ENCODE measurements at regions of chr14 and their contacts with region 1.

Region 1: DNA sequence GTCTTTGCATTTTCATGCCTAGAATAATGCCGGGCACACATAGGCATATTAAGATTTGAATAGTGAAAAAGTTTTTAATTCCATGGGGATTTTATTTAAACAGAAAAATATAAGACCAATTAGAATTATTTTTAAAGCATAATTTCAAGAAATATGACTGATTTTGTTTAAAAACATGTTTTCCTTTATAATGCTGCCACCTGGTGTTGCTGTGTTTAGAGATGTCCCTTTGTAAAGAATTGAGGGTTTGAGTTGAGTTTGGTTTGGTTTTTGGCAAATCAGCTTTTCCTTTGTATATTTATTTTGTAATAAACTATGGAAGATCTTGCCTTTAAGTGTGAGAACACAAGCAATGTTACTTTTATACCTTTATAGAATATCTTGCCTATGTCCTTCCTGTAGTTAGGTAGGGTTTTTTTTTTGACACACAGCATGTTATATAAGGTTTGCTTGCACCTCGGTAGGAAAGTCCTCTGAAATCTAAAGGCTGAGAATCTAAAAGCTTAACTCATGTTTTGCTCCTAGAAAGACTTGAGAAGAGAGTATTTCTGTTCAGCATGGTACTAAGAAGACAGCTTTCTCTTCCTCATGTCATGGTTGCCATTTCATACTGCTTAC is 31.4 kb upstream of the SNAPC1 start:
- DNase-seq: peak in 4 of 14 experiments; percentile 38 to 61 (median 55)
- ATAC-seq: no peak
- H3K4me3 ChIP-seq: no peak overlapping the region
- H3K4me3 Mint-ChIP-seq: no peak overlapping the region
- H3K27ac ChIP-seq: peak overlapping the region in 1 of 2 donors; percentile 2
- H3K27ac Mint-ChIP-seq: peak overlapping the region; percentile 27
- H3K4me1 ChIP-seq: no peaks in the 10 kb centered on the region
- H3K4me1 Mint-ChIP-seq: peaks cover 38% of the 10 kb centered on the region
- H3K27me3 ChIP-seq: no peaks in the 10 kb centered on the region
- H3K27me3 Mint-ChIP-seq: no peaks in the 10 kb centered on the region
- CTCF ChIP-seq: peak; percentile 87

Region 2: DNA sequence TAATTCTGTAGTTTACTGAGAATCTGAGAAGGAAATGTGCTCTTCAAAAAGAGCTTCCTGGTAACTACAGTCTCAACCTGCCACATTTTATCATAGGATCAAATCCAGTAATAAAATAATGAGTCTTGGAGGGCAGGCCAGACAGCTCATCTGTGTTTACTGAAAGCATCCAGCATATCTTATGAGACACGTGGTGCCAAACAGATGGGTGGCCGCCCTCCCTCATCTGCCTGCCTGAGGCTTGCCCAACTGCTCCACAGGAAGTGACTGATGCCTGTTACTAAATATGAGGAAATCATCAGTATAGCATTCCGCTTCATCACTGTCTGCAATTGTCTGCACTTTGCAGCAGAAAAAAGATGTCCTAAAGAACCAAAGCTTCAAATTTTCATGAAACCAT is 1579.2 kb before region 1 on chr14:
- CTCF ChIA-PET with region 1: no interaction called
- POLR2A ChIA-PET with region 1: no interaction called
- intact Hi-C with region 1: no loop called
- DNase-seq: peak; percentile 44 to 87 (median 68)
- ATAC-seq: peak; percentile 99
- H3K4me3 ChIP-seq: no peak overlapping the region
- H3K4me3 Mint-ChIP-seq: no peak overlapping the region
- H3K27ac ChIP-seq: peak overlapping the region; percentile 32 to 73
- H3K27ac Mint-ChIP-seq: peak overlapping the region; percentile 87
- H3K4me1 ChIP-seq: peaks cover 29% of the 10 kb centered on the region
- H3K4me1 Mint-ChIP-seq: peaks cover 52% of the 10 kb centered on the region
- H3K27me3 ChIP-seq: no peaks in the 10 kb centered on the region
- H3K27me3 Mint-ChIP-seq: no peaks in the 10 kb centered on the region
- CTCF ChIP-seq: no peak

Region 3: DNA sequence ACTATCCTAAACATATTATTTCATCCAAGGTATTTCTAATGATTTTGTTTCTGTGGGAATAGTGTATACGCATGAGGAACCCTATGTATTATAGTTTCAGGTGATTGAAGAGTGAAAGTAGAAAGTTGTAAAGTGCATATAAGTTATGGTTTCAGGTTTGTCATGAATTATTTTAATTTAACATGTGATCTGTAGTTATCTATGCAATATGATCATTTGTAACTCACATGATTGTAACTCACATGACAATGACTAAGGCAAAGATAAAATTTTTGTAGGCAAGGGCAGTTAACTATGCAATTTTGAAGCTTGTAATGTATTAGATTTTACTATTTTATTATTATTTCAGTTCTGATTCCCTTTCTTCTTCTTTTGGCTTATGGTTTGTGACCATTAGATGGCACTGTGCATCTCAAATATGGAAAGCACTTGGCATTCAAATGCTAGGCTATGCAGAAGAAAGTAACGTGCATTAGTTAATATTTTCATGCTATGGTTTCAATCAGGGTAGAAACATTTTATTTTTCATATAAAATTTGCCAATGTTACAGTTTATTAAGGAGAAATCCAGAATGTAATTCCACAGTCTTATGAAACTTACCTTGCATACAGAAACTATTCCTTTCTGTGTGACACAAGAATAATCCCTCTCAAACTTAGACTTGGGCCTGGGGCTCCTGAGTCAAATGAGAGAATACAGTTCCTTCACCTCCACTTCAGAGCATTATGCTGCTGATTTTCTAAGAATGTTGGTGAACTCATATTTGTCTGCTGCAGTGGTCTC is 434.0 kb before region 1 on chr14:
- CTCF ChIA-PET with region 1: interaction called, 4 read pairs
- POLR2A ChIA-PET with region 1: no interaction called
- intact Hi-C with region 1: loop called in 1 of 2 experiments (anchors 2 kb)
- DNase-seq: peak in 4 of 14 experiments; percentile 23 to 80 (median 75)
- ATAC-seq: peak; percentile 76
- H3K4me3 ChIP-seq: no peak overlapping the region
- H3K4me3 Mint-ChIP-seq: no peak overlapping the region
- H3K27ac ChIP-seq: no peak overlapping the region
- H3K27ac Mint-ChIP-seq: no peak overlapping the region
- H3K4me1 ChIP-seq: peaks cover 18% of the 10 kb centered on the region
- H3K4me1 Mint-ChIP-seq: peaks cover 56% of the 10 kb centered on the region
- H3K27me3 ChIP-seq: no peaks in the 10 kb centered on the region
- H3K27me3 Mint-ChIP-seq: no peaks in the 10 kb centered on the region
- CTCF ChIP-seq: peak; percentile 77

Region 4: GRCh38 chr14:61537563-61538463 is 193.1 kb before region 1 on chr14:
- CTCF ChIA-PET with region 1: no interaction called
- POLR2A ChIA-PET with region 1: no interaction called
- intact Hi-C with region 1: loop called in 1 of 2 experiments (anchors 5 kb)
- DNase-seq: peak in 4 of 14 experiments; percentile 19 to 61 (median 34)
- ATAC-seq: no peak
- H3K4me3 ChIP-seq: no peak overlapping the region
- H3K4me3 Mint-ChIP-seq: no peak overlapping the region
- H3K27ac ChIP-seq: peak overlapping the region in 1 of 2 donors; percentile 9
- H3K27ac Mint-ChIP-seq: peak overlapping the region; percentile 60
- H3K4me1 ChIP-seq: peaks cover 12% of the 10 kb centered on the region
- H3K4me1 Mint-ChIP-seq: peaks cover 39% of the 10 kb centered on the region
- H3K27me3 ChIP-seq: no peaks in the 10 kb centered on the region
- H3K27me3 Mint-ChIP-seq: no peaks in the 10 kb centered on the region
- CTCF ChIP-seq: no peak

Region 5: DNA sequence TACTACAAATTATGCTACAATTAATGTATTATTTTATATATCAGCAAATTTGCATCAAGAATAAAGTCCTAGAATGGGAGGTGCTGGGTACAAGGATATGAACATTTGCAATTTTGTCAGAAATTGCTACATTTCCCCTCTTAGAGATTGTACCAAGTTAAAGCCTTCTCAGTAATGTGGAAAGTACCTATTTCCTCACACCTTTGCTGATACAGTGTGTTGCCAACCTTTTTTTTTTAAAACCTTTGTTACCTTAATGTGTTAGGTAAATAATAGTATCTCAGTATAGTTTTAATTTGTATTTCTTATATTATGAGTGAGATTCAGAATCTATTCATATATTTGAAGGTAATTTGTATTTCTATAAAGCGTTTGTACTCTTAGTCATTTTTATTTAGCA is 130.9 kb before region 1 on chr14:
- CTCF ChIA-PET with region 1: no interaction called
- POLR2A ChIA-PET with region 1: no interaction called
- intact Hi-C with region 1: no loop called
- DNase-seq: no peak
- ATAC-seq: no peak
- H3K4me3 ChIP-seq: no peak overlapping the region
- H3K4me3 Mint-ChIP-seq: no peak overlapping the region
- H3K27ac ChIP-seq: no peak overlapping the region
- H3K27ac Mint-ChIP-seq: no peak overlapping the region
- H3K4me1 ChIP-seq: peaks cover 8% of the 10 kb centered on the region
- H3K4me1 Mint-ChIP-seq: peaks cover 25% of the 10 kb centered on the region
- H3K27me3 ChIP-seq: no peaks in the 10 kb centered on the region
- H3K27me3 Mint-ChIP-seq: no peaks in the 10 kb centered on the region
- CTCF ChIP-seq: no peak